ENCODE measurements at regions of chr15 and their contacts with region 1.

Region 1: GRCh38 chr15:36911322-36911944 is 188.9 kb downstream of the MEIS2 start:
- DNase-seq: no peak
- ATAC-seq: peak in 2 of 4 donors; percentile 10 to 26
- H3K4me3 ChIP-seq: no peak overlapping the region
- H3K27ac ChIP-seq: no peak overlapping the region
- H3K4me1 ChIP-seq: peaks cover 0 to 40% (median 18%) of the 10 kb centered on the region in 12 donors
- H3K27me3 ChIP-seq: no peaks in the 10 kb centered on the region
- CTCF ChIP-seq: no peak
- POLR2A ChIP-seq: no peak

Region 2: DNA sequence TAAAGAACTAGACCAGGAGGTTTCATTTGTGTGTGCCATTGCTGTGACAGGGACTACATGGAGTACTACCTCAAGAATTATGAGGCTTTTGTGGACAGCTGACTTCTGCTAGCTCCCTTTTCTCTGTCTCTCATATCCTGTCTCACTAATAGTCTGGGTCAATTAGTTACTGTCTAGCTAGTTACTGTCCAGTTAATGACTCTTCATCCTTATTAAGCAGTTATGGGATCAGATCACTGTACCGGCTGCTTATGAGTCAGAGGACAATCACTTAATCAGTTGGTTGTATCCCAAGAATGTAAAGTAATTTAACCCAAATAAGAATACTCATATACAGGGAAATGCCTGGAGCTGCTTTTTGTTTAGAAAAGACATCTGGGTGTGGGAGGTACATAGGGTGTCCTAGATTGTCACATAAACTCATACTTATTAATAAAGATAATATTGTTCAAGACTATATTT is 174.0 kb before region 1 on chr15:
- intact Hi-C with region 1: no loop called
- DNase-seq: no peak
- ATAC-seq: peak in 1 of 4 donors; percentile 21
- H3K4me3 ChIP-seq: no peak overlapping the region
- H3K27ac ChIP-seq: no peak overlapping the region
- H3K4me1 ChIP-seq: peaks cover 0 to 15% (median 0%) of the 10 kb centered on the region in 12 donors
- H3K27me3 ChIP-seq: no peaks in the 10 kb centered on the region
- CTCF ChIP-seq: no peak
- POLR2A ChIP-seq: no peak

Region 3: DNA sequence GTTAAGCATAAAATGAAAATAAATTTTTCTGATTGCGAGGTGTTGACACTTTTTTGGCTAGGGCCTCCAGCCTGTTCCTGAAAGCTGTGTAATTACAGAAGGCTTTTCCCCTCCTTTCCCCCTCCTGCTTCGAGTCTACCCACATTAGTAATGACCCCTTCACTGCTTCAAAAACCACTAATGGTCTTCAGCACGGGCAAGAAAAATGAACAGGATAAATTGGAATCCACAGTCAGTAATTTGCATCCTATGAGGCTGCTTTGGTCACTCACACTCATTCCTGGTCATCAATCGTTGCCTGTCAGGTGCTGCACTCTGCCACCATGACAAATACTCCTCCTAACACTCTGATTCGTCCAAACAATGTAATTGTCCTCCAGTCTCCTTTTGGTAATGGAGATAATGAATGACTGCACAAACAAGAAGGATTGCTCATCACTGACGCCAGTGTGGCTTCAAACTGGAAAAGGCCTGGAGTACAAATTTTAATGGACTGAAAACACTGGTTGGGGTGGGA is 40.4 kb after region 1 on chr15:
- intact Hi-C with region 1: loop called in 1 of 10 experiments (anchors 5 kb)
- DNase-seq: no peak
- ATAC-seq: peak; percentile 31 to 85 (median 70)
- H3K4me3 ChIP-seq: no peak overlapping the region
- H3K27ac ChIP-seq: peak overlapping the region in 3 of 12 donors; percentile 11 to 26 (median 12)
- H3K4me1 ChIP-seq: peaks cover 0 to 34% (median 16%) of the 10 kb centered on the region in 12 donors
- H3K27me3 ChIP-seq: no peaks in the 10 kb centered on the region
- CTCF ChIP-seq: no peak
- POLR2A ChIP-seq: no peak

Region 4: DNA sequence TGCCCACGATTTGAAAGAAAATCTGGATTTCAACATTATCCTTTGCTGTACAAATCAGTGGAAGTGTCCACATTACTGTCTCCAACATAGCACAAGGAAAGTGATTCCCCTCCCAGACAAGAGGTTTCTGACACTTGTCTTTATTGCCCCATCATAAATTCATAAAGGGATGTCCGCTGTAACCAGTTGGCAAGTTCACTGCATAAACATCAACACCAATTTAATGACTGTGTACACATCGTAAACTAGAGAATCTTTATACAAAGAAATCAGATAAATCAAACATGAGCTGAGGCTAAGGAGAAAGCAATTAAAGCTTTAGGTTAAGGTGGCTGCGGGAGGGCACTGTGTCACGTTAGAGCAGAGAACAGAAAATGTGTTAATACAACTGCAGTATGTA is 59.1 kb after region 1 on chr15:
- intact Hi-C with region 1: loop called in 1 of 10 experiments (anchors 10 kb)
- DNase-seq: no peak
- ATAC-seq: no peak
- H3K4me3 ChIP-seq: no peak overlapping the region
- H3K27ac ChIP-seq: no peak overlapping the region
- H3K4me1 ChIP-seq: peaks cover 0 to 28% (median 7%) of the 10 kb centered on the region in 12 donors
- H3K27me3 ChIP-seq: no peaks in the 10 kb centered on the region
- CTCF ChIP-seq: no peak
- POLR2A ChIP-seq: no peak

Region 5: GRCh38 chr15:37678124-37678523 is 766.7 kb after region 1 on chr15:
- intact Hi-C with region 1: no loop called
- DNase-seq: no peak
- ATAC-seq: no peak
- H3K4me3 ChIP-seq: no peak overlapping the region
- H3K27ac ChIP-seq: no peak overlapping the region
- H3K4me1 ChIP-seq: no peaks in the 10 kb centered on the region
- H3K27me3 ChIP-seq: no peaks in the 10 kb centered on the region
- CTCF ChIP-seq: no peak
- POLR2A ChIP-seq: no peak